ENCODE measurements at regions of chr1 and their contacts with region 1.

Region 1: DNA sequence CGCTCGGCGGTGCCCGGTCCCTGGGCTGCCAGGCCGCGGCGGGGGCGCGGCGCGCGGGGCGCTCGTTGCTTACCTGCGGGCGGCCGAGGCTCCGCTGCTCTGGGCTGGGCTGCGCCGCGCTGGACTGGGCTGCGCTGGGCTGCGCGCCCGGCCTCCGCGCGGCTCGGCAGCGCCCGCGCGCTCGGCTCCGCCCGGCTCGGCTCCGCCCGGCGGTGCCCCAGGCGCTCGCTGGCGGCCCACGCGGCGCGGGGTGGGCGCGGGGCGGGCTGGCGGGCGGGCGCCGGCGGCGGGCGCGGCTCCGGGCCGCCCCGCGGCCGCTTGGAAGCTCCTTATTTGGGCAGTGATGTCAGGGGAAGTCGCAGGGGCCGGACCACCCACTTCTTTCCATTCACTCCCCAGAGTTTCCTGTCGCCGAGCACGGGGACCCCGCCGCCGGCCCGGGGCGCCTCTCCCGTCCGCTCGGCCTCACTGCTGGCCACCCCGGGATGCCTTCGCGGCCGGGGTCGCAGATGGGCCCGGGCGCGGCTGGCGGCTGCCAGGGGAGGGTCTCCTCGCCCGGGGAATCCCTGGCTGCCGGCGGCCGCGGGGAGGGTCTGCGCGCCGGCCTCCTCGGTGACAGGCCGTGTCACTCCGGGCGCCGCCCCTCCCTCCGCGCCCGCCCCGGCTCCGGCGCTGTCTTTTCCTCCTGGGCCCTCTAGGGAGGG is 177.7 kb upstream of the EDN2 start:
- DNase-seq: peak; percentile 80
- H3K4me3 Mint-ChIP-seq: peak overlapping the region; percentile 67
- H3K27ac Mint-ChIP-seq: peak overlapping the region; percentile 67
- H3K4me1 Mint-ChIP-seq: peaks cover 77% of the 10 kb centered on the region
- H3K27me3 Mint-ChIP-seq: no peaks in the 10 kb centered on the region

Region 2: GRCh38 chr1:41626616-41627375 is 35.4 kb before region 1 on chr1:
- CTCF ChIA-PET with region 1: no interaction called
- intact Hi-C with region 1: loop called (anchors 2 kb)
- DNase-seq: peak; percentile 83
- H3K4me3 Mint-ChIP-seq: no peak overlapping the region
- H3K27ac Mint-ChIP-seq: peak overlapping the region; percentile 91
- H3K4me1 Mint-ChIP-seq: peaks cover 79% of the 10 kb centered on the region
- H3K27me3 Mint-ChIP-seq: no peaks in the 10 kb centered on the region

Region 3: GRCh38 chr1:41683681-41684500 is 21.7 kb after region 1 on chr1:
- CTCF ChIA-PET with region 1: interaction called, 4 read pairs
- intact Hi-C with region 1: loop called (anchors 2 kb)
- DNase-seq: peak; percentile 68
- H3K4me3 Mint-ChIP-seq: no peak overlapping the region
- H3K27ac Mint-ChIP-seq: peak overlapping the region; percentile 65
- H3K4me1 Mint-ChIP-seq: peaks cover 54% of the 10 kb centered on the region
- H3K27me3 Mint-ChIP-seq: no peaks in the 10 kb centered on the region

Region 4: DNA sequence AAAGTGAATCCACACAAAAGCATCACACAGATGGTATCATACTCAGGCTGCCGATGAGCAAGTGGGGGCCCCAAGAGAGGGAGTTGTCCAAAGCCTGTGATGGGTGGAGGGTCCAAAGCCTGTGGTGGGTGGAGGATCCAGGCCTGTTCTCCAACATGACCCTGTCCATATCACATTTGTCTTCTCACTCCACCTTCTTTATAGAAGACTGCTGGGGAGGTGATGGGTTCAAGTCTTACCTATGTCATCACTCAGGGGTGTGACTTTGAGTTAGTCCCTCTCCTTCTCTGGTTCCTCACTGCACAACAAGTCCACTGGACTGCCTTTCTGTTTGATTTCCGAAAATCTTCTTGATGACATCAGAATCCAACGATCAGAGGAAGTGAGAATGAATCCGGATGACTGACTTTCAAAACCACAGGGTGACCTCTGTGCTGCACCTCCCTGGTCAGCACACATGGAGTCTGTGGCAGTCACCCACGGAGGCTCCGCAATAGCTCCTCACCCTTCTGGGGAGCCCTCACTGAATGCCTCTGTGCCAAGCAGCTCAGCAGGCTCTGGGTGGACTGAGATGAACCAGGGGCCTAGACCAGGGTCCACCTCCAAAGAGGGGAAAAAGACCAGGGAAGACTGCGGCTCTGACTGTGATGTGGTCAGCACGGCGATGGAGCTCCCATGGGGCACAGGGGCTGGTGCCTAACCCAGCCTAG is 89.7 kb after region 1 on chr1:
- CTCF ChIA-PET with region 1: interaction called, 3 read pairs
- intact Hi-C with region 1: loop called (anchors 1 kb)
- DNase-seq: no peak
- H3K4me3 Mint-ChIP-seq: no peak overlapping the region
- H3K27ac Mint-ChIP-seq: peak overlapping the region; percentile 98
- H3K4me1 Mint-ChIP-seq: peaks cover 75% of the 10 kb centered on the region
- H3K27me3 Mint-ChIP-seq: no peaks in the 10 kb centered on the region

Region 5: GRCh38 chr1:41806472-41807155 is 144.4 kb after region 1 on chr1:
- CTCF ChIA-PET with region 1: interaction called, 3 read pairs
- intact Hi-C with region 1: loop called (anchors 2 kb)
- DNase-seq: peak; percentile 71
- H3K4me3 Mint-ChIP-seq: peak overlapping the region; percentile 31
- H3K27ac Mint-ChIP-seq: peak overlapping the region; percentile 86
- H3K4me1 Mint-ChIP-seq: peaks cover 89% of the 10 kb centered on the region
- H3K27me3 Mint-ChIP-seq: no peaks in the 10 kb centered on the region

Region 6: DNA sequence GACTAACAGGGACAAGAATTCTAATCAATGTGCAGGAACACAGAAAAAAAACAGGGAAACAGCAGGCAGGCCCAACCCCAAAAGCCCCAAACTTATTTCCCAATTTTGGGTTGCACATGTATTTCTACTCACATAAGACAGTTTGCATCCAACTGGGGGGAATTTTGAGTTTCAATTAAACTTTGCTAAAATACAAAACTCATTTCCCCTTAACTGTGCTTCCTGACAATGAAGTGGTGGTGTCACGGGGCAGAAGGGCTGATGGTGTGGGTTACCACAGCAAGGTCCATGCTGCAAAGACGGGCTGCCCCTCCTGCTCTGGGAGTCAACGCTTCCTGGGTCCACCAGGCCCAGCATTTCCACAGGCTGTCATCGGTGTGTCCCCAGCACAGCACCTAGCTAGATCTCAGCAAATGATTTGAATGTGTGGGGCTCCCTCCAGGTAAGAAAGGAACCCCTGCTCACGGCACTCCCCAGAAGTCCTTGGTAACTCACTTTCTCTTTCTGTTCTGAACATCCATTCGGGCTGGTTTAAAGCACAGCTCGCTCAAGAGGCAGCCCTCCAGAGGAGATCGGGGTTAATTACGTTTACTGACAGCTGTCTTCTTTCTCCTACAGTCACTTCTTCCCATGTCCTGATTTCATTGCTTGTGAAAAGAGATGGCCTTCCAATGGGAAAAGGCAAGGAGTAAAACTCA is 229.1 kb after region 1 on chr1:
- CTCF ChIA-PET with region 1: no interaction called
- intact Hi-C with region 1: loop called (anchors 10 kb)
- DNase-seq: peak; percentile 71
- H3K4me3 Mint-ChIP-seq: peak overlapping the region; percentile 69
- H3K27ac Mint-ChIP-seq: peak overlapping the region; percentile 68
- H3K4me1 Mint-ChIP-seq: peaks cover 45% of the 10 kb centered on the region
- H3K27me3 Mint-ChIP-seq: no peaks in the 10 kb centered on the region

Measured in activated naive CD4-positive, alpha-beta T cell treated with anti-CD3 and anti-CD28 coated beads for 36 hours (primary cell).